Heart right ventricle (tissue), 16 donors: ENCODE measurements at regions of chr3 and their contacts with region 1.

Region 1: DNA sequence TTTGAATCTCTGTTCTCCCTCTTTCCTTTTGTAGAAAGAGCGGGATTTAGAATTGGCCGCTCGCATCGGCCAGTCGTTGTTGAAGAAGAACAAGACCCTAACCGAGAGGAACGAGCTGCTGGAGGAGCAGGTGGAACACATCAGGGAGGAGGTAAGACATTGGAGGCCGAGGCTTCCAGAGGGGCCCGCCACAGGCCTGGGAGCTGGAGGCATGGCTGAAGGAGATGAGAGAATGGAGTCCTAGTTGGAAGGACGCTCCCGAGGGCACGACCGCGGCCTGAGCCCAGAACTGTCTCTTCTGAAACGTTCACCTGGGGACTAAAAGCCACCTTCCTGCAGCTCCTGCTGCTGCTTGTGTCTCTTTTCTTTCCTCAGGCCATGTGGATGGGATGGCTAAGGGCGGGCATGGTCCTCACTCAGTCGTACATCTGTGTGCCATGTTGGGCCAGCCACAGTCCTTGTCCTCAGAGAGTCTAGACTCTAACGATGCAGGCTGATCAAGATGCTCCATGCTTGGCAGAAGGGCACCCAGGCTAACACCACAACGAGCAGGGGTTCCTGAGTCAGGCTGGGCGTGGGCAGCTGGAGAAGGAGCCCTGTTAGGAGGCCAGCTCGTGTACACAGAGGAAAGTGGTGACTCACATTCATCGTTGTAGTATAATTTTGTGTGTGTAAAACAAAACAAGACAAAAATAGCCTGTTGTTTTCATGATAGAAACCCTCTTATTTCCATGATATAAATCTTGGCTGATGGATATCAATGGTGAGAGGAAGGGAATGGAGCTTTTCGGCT is 81.1 kb downstream of the CCK start:
- DNase-seq: no peak
- ATAC-seq: no peak
- H3K4me3 ChIP-seq: no peak overlapping the region
- H3K27ac ChIP-seq: peak overlapping the region in 2 of 10 donors; percentile 9 to 30
- H3K4me1 ChIP-seq: peaks cover 0 to 87% (median 58%) of the 10 kb centered on the region in 9 donors
- H3K27me3 ChIP-seq: no peaks in the 10 kb centered on the region
- CTCF ChIP-seq: no peak

Region 2: GRCh38 chr3:42149532-42150426 is 35.1 kb before region 1 on chr3:
- intact Hi-C with region 1: loop called in 1 of 10 experiments (anchors 5 kb)
- DNase-seq: no peak
- ATAC-seq: peak in 4 of 8 donors; percentile 15 to 65 (median 38)
- H3K4me3 ChIP-seq: no peak overlapping the region
- H3K27ac ChIP-seq: no peak overlapping the region
- H3K4me1 ChIP-seq: peaks cover 0 to 73% (median 40%) of the 10 kb centered on the region in 9 donors
- H3K27me3 ChIP-seq: no peaks in the 10 kb centered on the region
- CTCF ChIP-seq: no peak

Region 3: DNA sequence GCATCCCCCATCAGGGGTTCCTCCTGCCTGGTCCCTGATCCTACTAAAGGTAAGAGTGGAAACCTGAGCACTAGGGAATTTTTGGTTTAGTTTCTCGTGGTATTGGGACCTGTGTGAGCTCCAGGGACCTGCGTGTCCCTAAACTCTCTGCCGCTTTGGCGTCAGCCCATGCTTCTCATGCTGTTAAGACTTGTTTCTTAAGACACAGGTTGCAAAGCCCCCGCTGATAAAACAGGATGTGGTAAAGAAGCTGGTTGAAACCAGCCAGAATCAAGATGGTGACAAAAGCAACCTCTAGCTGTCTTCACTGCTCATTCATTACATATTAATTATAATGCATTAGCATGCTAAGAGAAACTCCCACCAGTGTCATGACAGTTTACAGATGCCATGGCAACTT is 161.0 kb after region 1 on chr3:
- intact Hi-C with region 1: no loop called
- DNase-seq: no peak
- ATAC-seq: no peak
- H3K4me3 ChIP-seq: no peak overlapping the region
- H3K27ac ChIP-seq: no peak overlapping the region
- H3K4me1 ChIP-seq: no peaks in the 10 kb centered on the region
- H3K27me3 ChIP-seq: peaks cover 0 to 28% (median 4%) of the 10 kb centered on the region in 7 donors
- CTCF ChIP-seq: no peak

Region 4: DNA sequence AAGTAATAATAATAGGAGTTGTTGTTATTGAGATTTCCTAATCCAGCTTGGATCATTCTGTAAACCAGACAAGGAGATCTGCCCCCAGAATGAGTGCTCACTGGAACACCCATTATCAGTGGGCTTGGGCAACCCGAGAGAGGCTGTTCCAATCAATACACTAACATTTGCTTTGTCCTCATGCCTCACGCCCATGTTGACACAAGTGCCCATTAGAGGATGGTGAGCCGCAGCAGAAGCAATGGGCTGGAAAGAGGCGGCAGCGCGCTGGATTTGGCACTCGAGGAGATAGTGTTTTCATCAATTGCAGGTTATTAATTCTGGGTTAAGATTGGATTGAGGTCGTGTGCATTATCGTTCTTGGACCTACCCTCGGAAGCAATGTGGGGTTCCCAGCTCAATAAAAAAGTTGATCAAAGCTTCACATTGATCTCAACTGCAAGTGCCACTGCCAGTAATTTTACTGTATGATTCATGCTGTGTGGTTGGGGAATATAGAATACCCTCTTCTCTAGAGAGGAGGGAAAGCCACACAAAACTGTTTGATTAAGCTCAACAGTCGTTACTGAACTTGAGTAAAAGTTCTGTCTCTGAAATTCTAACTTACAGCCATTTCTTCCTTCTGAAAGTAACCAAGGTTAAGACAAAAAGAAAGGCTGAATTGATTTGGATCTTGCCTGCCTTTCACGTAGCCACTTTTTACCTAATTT is 209.9 kb after region 1 on chr3:
- intact Hi-C with region 1: no loop called
- DNase-seq: no peak
- ATAC-seq: no peak
- H3K4me3 ChIP-seq: no peak overlapping the region
- H3K27ac ChIP-seq: no peak overlapping the region
- H3K4me1 ChIP-seq: peaks cover 0 to 4% (median 0%) of the 10 kb centered on the region in 9 donors
- H3K27me3 ChIP-seq: peaks cover 0 to 11% (median 0%) of the 10 kb centered on the region in 7 donors
- CTCF ChIP-seq: no peak